GM13976 (cell line): ENCODE measurements at regions of chr13 and their contacts with region 1.

Region 1: GRCh38 chr13:91406619-91407018 is 8.2 kb downstream of the GPC5 start:
- DNase-seq: peak; percentile 52
- CTCF ChIP-seq: peak; percentile 62

Region 2: GRCh38 chr13:91133941-91134802 is 272.4 kb before region 1 on chr13:
- in situ Hi-C with region 1: loop called (anchors 25 kb)
- DNase-seq: peak; percentile 32
- CTCF ChIP-seq: peak; percentile 63

Region 3: GRCh38 chr13:91313103-91313502 is 93.5 kb before region 1 on chr13:
- in situ Hi-C with region 1: loop called (anchors 10 kb)
- DNase-seq: no peak
- CTCF ChIP-seq: peak; percentile 68

Region 4: GRCh38 chr13:91747186-91747585 is 340.6 kb after region 1 on chr13:
- in situ Hi-C with region 1: no loop called
- DNase-seq: no peak
- CTCF ChIP-seq: no peak

Region 5: GRCh38 chr13:92436924-92437323 is 1030.3 kb after region 1 on chr13:
- in situ Hi-C with region 1: no loop called
- DNase-seq: no peak
- CTCF ChIP-seq: no peak